Prostate gland (tissue), 2 donors: ENCODE measurements at regions of chr5 and their contacts with region 1.

Region 1: DNA sequence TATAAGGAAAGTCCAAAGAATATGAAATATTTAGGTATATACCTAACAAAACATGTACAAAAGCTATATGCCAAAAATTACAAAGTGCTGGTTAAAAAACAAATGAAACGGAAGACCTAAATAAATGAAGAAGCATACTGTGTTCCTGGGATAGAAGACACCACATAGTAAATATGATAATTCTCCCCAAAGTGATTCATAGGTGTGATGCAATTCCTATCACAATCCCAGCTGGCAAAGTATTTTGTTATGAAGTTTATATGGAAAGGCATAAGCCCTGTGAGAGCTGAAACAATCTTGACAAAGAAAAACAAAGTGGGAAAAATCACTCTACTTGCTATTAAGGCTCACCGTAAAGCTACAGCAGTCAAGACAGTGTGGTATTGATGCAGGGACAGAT is 2.6 kb upstream of the SMIM23 start:
- DNase-seq: no peak
- H3K4me3 ChIP-seq: no peak overlapping the region
- H3K27ac ChIP-seq: no peak overlapping the region
- H3K4me1 ChIP-seq: no peaks in the 10 kb centered on the region
- H3K27me3 ChIP-seq: no peaks in the 10 kb centered on the region
- CTCF ChIP-seq: no peak
- POLR2A ChIP-seq: no peak

Region 2: DNA sequence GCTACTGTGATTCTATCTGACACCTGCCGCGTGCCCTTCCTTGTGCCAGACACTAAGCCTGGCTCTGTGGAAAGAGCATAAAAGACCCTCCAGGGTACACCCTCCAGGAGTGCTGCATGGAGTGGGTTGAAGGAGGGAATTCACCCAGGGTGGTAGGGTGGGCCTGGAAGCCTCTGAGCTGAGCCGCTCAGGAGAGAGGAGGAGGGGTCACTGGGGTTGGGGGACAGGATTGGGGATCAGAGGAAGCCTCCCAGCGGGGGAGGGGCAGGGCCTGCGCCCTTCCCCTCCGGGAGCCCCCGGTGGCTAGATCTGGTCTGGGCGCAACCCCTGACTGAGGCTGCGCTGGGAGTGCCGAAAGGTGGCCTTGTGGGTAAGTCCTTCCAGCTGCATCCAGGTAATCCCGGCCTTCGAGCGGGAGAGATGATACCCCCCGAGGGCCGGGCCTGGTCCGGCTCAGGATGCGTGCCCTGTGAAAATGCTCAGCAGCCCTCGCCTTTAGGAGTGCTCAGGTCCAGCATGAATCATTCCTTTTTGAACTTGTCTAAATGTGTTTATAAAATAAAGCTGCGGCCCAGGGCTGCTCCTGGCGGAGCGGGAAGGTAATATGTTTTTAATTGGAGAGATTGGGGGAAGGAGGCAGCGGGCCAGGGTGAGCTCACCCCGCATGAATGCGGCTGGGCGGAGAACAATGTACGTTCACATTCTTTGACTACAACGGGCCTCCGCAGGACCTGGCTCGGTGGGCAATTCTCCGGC is 115.5 kb before region 1 on chr5:
- intact Hi-C with region 1: no loop called
- DNase-seq: peak; percentile 61
- H3K4me3 ChIP-seq: no peak overlapping the region
- H3K27ac ChIP-seq: no peak overlapping the region
- H3K4me1 ChIP-seq: no peaks in the 10 kb centered on the region
- H3K27me3 ChIP-seq: no peaks in the 10 kb centered on the region
- CTCF ChIP-seq: peak in 1 of 4 experiments; percentile 34
- POLR2A ChIP-seq: no peak

Region 3: DNA sequence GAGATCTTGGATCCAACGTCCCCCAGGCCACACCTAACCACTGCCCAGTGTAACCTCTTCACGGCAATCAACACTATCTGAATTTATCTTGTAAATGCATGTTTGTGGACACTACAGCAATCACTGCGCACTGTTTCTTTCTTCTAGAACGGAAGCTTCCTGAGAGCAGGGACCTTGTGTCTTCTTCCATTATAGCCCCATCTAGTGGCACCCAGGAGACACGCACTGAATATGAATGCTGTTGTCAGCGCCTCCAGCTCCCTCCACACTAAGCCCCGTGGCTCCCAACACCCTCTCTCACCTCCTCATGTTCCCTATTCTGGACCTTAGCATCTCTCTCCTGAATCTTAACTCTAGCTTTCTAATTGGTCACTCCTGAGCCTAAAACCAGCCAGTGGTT is 75.3 kb after region 1 on chr5:
- intact Hi-C with region 1: loop called (anchors 5 kb)
- DNase-seq: no peak
- H3K4me3 ChIP-seq: no peak overlapping the region
- H3K27ac ChIP-seq: no peak overlapping the region
- H3K4me1 ChIP-seq: no peaks in the 10 kb centered on the region
- H3K27me3 ChIP-seq: no peaks in the 10 kb centered on the region
- CTCF ChIP-seq: peak in 1 of 4 experiments; percentile 13
- POLR2A ChIP-seq: no peak

Region 4: DNA sequence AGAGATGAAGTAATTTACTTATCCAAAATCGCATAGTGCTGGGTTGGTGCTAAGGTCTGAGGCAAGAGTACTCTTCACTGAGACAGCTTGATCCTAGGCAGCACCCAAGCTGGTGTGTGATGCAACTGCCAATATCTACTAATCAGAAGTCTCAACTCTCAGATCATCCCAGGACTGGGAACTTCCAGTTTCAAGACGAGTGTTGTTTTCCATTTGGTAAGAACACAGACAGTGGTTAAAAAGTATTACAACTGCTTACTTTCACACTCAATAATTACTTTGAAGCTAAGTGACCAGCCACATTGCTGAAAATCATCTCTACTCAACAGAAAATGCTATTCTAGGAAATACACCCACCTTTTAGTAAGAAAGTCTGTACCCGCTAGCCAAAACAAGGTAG is 178.1 kb after region 1 on chr5:
- intact Hi-C with region 1: no loop called
- DNase-seq: no peak
- H3K4me3 ChIP-seq: no peak overlapping the region
- H3K27ac ChIP-seq: no peak overlapping the region
- H3K4me1 ChIP-seq: peaks cover 10% of the 10 kb centered on the region
- H3K27me3 ChIP-seq: no peaks in the 10 kb centered on the region
- CTCF ChIP-seq: no peak
- POLR2A ChIP-seq: no peak

Region 5: DNA sequence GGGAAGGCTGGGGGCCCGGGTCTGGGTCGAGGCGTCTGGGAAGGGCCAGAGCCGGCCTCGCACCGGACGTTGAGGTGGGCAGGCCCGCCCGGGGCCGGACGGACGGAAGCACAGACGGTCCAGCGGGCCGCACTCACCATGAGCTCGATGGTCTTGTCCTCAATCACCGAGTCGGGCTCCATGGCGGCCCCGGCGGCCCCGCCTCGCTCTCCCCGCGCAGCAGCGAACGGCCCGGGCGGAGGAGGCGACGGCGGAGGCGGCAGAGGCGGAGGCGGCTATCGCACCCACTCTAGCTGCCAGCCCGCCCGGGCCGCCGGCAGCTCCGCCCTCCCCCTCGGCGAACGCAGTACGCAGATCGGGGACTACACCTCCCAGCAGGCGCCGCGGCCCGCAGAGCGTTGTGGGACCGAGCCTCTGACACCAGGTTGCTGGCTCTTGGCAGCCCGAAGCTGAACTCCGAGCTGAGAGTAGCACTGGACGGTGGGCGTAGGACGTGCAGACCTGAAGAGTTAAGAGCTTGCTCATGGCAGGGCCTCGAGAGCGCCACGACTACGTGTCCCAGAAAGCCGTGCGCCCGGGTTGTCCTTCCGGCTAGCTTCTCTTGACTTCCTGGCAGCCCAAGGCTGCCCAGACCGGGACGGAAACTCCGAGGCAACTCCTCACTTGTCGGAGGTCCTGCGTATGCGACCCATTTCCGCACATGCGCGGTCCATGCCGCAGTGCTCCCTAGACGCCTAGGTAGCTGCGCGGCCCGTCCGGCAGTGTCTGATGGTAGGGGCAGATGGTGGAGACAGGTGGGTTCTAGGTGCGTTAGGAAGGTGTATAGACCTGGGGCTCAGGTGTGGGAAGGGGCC is 223.5 kb after region 1 on chr5 and contains the start of gene FBXW11:
- intact Hi-C with region 1: no loop called
- DNase-seq: peak; percentile 97
- H3K4me3 ChIP-seq: peak within 1 kb of the TSS; percentile 94 to 96
- H3K27ac ChIP-seq: peak within 1 kb of the TSS; percentile 97 to 98
- H3K4me1 ChIP-seq: peaks cover 16% of the 10 kb centered on the region
- H3K27me3 ChIP-seq: no peaks in the 10 kb centered on the region
- CTCF ChIP-seq: peak in 1 of 4 experiments; percentile 22
- POLR2A ChIP-seq: peak; percentile 82
- total RNA-seq, gene FBXW11: 54.7 to 61.4 TPM

Region 6: GRCh38 chr5:172028167-172028566 is 245.1 kb after region 1 on chr5:
- intact Hi-C with region 1: no loop called
- DNase-seq: no peak
- H3K4me3 ChIP-seq: no peak overlapping the region
- H3K27ac ChIP-seq: no peak overlapping the region
- H3K4me1 ChIP-seq: no peaks in the 10 kb centered on the region
- H3K27me3 ChIP-seq: no peaks in the 10 kb centered on the region
- CTCF ChIP-seq: no peak
- POLR2A ChIP-seq: no peak